ENCODE measurements at regions of chr19 and their contacts with region 1.

Region 1: DNA sequence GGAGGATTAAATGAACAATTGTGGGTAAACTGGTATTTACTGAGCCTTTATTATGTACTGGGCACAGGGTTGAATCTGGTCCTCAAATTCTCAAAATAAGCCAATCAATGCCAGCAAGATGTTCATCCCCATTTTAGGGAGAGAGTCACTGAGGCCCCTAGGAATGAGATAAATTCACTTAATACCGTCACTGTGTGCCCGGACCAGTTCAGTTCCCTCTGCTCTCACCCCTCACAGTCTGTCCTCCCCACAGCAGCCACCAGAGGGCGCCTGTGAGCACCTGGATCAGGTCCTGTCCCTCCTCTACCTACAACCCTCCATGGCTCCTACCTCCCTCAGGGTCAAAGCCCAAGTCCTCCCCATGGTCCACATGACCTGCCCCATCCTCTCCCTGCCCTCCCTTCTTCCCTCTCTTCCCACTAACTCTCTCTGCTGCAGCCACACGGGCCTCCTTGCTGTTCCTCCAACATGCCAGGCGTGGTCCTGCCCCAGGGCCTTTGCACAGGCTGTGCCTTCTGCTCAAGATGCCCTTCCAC is 42.0 kb upstream of the NFIC start:
- DNase-seq: peak in 1 of 2 donors; percentile 75
- ATAC-seq: peak in 3 of 8 donors; percentile 20 to 38 (median 23)
- H3K4me3 ChIP-seq: no peak overlapping the region
- H3K27ac ChIP-seq: no peak overlapping the region
- H3K4me1 ChIP-seq: peaks cover 0 to 4% (median 0%) of the 10 kb centered on the region in 9 donors
- H3K27me3 ChIP-seq: peaks cover 6 to 25% (median 21%) of the 10 kb centered on the region in 7 donors
- CTCF ChIP-seq: peak; percentile 48 to 80 (median 66)

Region 2: GRCh38 chr19:3429581-3430080 is 105.2 kb after region 1 on chr19:
- intact Hi-C with region 1: loop called in 8 of 10 experiments (anchors 1 to 5 kb)
- DNase-seq: peak; percentile 90
- ATAC-seq: peak; percentile 63 to 89 (median 82)
- H3K4me3 ChIP-seq: peak overlapping the region in 1 of 10 donors; percentile 23
- H3K27ac ChIP-seq: peak overlapping the region; percentile 66 to 93 (median 82)
- H3K4me1 ChIP-seq: peaks cover 10 to 67% (median 36%) of the 10 kb centered on the region in 9 donors
- H3K27me3 ChIP-seq: no peaks in the 10 kb centered on the region
- CTCF ChIP-seq: peak; percentile 99 to 100 (median 99)

Region 3: DNA sequence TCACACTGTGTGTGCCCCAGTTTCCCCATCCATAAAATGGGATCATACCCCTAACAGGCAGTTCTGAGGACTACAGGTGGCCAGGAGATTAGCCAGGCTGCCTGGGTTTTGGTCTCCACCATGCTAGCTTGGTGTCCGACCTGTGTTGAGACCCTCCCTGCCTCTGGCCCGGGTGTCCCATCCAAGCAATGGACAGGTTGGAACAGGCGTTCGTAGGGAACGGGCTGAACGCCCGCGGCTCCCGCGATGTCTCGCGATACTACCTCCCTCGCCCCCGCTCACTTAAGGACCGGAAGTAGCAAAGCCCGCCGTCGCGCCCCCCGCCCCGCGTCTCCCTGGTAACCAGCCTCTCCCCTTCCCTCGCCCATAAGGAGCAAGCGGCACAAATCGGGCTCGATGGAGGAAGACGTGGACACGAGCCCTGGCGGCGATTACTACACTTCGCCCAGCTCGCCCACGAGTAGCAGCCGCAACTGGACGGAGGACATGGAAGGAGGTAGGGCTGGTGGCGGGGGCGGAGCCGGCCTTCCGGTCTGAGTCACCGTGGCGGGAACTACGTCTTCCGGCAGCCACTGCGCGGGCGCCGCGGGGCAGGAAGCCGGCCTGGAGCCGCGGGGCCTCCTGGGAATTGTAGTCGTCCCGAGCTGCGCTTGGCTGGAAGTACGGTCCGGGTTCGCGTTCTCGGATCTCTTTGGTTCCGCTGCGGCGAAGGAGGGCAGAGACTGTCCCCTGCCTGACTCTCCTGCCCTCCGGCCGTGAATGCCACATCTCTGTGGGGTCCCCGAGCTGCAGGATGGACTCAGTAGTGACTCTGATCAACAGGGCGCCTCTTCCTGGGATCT is 110.5 kb after region 1 on chr19:
- intact Hi-C with region 1: loop called in 2 of 10 experiments (anchors 5 kb)
- DNase-seq: peak; percentile 97
- ATAC-seq: peak; percentile 93 to 98 (median 97)
- H3K4me3 ChIP-seq: peak overlapping the region; percentile 12 to 60 (median 52)
- H3K27ac ChIP-seq: peak overlapping the region; percentile 75 to 94 (median 88)
- H3K4me1 ChIP-seq: peaks cover 6 to 45% (median 29%) of the 10 kb centered on the region in 9 donors
- H3K27me3 ChIP-seq: no peaks in the 10 kb centered on the region
- CTCF ChIP-seq: no peak

Region 4: DNA sequence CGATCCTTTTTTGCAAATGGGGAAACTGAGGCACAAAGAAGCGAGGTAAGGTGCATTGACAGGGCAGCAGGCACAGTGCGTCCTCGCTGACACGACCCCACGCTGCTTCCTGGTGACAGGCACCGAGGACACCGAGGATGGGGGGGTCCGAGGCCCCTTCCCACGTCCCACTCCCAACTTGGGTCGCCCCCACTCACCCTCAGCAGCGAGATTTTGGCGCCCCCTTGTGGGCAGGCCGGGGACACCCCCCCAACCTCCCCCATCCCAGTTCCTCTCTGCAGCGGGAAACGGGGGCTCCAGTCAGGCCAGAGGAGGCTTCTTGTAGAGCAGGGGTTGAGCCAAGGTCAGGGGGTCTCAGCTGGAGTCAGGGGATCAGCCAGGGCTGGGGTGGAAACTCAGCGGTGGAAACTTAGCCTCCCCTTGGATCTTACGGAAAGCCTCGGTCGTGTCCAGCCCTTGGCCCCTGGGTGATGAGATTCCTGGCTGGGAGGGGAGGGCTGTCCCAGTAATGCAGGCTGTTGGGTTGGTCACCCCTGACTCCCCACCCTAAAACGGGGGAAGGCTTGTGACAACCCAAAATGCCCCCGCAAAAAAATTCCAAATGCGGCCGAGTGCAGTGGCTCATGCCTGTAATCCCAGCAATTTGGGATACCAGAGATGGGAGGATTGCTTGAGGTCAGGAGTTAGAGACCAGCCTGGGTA is 147.7 kb after region 1 on chr19:
- intact Hi-C with region 1: loop called (anchors 1 to 5 kb)
- DNase-seq: peak; percentile 34 to 58
- ATAC-seq: peak; percentile 35 to 74 (median 64)
- H3K4me3 ChIP-seq: no peak overlapping the region
- H3K27ac ChIP-seq: no peak overlapping the region
- H3K4me1 ChIP-seq: peaks cover 3 to 36% (median 10%) of the 10 kb centered on the region in 9 donors
- H3K27me3 ChIP-seq: peaks cover 0 to 5% (median 0%) of the 10 kb centered on the region in 7 donors
- CTCF ChIP-seq: peak; percentile 83 to 95 (median 89)

Region 5: DNA sequence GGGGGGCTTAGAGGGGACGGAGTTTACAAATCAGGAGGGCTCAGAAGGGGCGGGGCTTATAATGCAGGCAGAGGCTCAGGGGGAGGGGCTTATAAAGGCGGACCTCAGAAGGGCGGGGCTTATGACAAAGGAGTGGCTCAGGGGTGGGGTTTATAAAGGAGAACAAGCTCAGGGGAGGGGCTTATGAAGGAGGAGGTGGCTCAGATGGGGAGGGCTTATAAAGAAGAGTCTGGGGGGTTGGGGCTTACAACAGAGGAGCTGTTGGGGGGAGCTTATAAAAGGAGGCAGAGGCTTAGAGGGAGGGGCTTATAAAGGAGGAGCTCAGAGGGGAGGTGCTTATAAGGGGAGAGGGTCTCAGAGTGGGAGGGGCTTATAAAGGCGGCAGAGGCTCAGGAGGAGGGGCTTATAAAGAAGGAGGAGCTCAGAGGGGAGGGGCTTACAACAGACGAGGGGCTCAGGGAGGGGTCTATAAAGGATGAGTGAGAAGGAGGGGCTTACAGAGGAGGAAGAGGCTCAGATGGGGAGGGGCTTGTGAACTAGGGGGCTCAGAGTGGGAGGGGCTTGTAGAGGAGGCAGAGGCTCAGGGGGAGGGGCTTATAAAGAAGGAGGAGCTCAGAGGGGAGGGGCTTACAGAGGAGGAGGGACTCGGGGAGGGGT is 154.9 kb after region 1 on chr19:
- intact Hi-C with region 1: loop called in 3 of 10 experiments (anchors 2 to 5 kb)
- DNase-seq: no peak
- ATAC-seq: no peak
- H3K4me3 ChIP-seq: no peak overlapping the region
- H3K27ac ChIP-seq: no peak overlapping the region
- H3K4me1 ChIP-seq: peaks cover 0 to 3% (median 0%) of the 10 kb centered on the region in 9 donors
- H3K27me3 ChIP-seq: peaks cover 15 to 50% (median 42%) of the 10 kb centered on the region in 7 donors
- CTCF ChIP-seq: no peak

Region 6: DNA sequence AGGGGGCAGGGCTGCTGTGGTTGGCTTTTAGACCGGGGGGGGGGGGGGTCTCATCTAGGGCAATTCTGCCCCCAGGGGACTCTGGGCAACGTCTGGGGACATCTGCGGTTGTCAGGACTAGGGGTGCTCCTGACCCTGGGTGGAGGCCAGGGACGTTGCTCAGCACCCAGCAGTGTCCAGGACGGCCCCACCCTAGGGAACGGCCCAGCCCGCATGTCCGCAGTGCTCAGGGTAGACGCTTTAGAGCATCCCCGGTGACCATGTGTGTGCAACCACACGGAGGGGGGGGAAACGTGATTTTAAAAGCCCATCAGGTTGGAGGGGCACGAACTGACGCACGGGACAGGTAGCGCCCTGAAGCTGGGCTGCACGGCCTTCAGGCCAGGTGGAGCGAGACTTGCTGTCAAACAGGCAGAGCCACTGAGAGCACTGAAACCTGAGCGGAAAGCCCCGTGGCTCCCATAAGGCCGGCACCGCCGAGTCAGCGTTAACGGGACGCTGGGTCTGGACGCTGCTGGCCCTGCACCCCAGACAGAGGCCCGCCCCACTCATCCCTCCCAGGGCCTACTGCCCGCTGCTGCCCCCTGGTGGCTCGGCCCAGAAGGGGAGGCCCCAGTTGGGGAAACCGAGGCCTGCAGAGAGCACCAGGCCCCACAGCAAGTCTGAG is 293.9 kb after region 1 on chr19:
- intact Hi-C with region 1: loop called in 2 of 10 experiments (anchors 10 kb)
- DNase-seq: peak; percentile 64 to 77
- ATAC-seq: peak; percentile 72 to 93 (median 88)
- H3K4me3 ChIP-seq: peak overlapping the region in 8 of 10 donors; percentile 16 to 45 (median 36)
- H3K27ac ChIP-seq: peak overlapping the region in 8 of 10 donors; percentile 15 to 74 (median 56)
- H3K4me1 ChIP-seq: peaks cover 0 to 20% (median 14%) of the 10 kb centered on the region in 9 donors
- H3K27me3 ChIP-seq: no peaks in the 10 kb centered on the region
- CTCF ChIP-seq: peak; percentile 88 to 99 (median 96)

Region 7: GRCh38 chr19:3626473-3627350 is 302.3 kb after region 1 on chr19 and contains the start of gene CACTIN:
- intact Hi-C with region 1: loop called in 1 of 10 experiments (anchors 10 kb)
- DNase-seq: peak; percentile 99
- ATAC-seq: peak; percentile 97 to 99 (median 99)
- H3K4me3 ChIP-seq: peak within 1 kb of the TSS; percentile 64 to 100 (median 90)
- H3K27ac ChIP-seq: peak within 1 kb of the TSS; percentile 85 to 98 (median 95)
- H3K4me1 ChIP-seq: peaks cover 11 to 27% (median 19%) of the 10 kb centered on the region in 9 donors
- H3K27me3 ChIP-seq: no peaks in the 10 kb centered on the region
- CTCF ChIP-seq: peak in 3 of 9 donors; percentile 3 to 19 (median 12)
- total RNA-seq, gene CACTIN: 9.7 to 15.8 (median 12.1) TPM